ENCODE measurements at regions of chr3 and their contacts with region 1.

Region 1: DNA sequence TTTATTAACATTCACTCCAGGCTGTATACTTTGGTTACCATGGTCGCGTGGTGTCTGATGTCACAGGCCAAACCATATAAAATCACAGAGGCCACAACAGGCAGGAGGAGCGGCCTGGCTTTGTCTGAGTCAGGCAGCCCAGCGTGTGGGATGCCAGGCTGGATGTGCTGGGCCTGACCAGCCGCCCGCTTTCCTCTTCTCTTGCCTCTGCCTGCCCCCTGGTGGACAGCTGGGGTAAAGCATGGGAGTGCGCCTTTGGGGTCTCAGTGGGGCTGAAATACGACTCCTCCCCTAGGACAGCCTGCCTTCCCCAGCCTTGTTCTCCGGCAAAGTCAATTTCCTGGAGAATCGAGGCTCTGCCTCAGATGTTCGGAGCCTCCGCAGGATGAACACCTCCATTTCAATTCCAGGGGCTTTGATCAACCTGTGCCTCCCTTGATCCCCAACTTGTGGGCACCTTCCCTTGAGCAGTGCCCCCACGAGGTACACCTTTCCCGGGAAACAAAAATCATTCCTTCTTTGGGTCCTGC is 78.2 kb downstream of the CCNL1 start:
- DNase-seq: peak; percentile 92 to 97 (median 96)
- ATAC-seq: peak; percentile 85 to 94
- H3K4me3 ChIP-seq: no peak overlapping the region
- H3K27ac ChIP-seq: peak overlapping the region; percentile 60
- H3K4me1 ChIP-seq: peaks cover 3% of the 10 kb centered on the region
- H3K27me3 ChIP-seq: no peaks in the 10 kb centered on the region

Region 2: DNA sequence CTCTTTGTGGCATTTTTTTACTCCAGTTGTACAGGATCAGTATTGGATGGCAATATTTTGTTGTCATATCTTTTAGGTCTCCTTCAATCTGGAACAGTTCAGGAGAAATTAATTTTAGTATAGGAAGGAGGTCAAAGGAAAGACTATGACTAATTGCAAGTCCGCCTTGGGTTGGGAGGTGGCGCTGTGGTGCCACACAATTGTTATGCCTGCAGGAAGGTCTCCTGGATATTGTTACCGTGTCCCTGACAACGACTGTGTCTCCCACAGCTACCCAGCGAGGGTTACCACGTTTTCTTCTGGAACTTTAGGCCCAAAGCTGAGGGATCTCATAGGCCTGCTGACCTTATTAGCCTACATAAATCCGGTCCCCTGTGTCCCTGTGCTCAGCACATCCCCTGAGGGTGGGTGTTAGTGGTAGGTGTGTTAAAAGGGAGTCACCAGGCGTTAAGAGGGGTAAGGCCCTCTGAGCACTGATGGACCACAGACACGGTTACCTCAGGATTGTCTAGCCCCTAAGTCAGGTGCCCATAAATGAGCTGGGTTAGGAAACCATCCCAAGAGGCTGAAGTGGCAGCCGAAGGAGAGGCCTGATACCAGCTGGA is 929.8 kb before region 1 on chr3:
- intact Hi-C with region 1: no loop called
- DNase-seq: peak; percentile 61 to 86 (median 82)
- ATAC-seq: peak; percentile 65 to 71
- H3K4me3 ChIP-seq: no peak overlapping the region
- H3K27ac ChIP-seq: no peak overlapping the region
- H3K4me1 ChIP-seq: no peaks in the 10 kb centered on the region
- H3K27me3 ChIP-seq: no peaks in the 10 kb centered on the region

Region 3: DNA sequence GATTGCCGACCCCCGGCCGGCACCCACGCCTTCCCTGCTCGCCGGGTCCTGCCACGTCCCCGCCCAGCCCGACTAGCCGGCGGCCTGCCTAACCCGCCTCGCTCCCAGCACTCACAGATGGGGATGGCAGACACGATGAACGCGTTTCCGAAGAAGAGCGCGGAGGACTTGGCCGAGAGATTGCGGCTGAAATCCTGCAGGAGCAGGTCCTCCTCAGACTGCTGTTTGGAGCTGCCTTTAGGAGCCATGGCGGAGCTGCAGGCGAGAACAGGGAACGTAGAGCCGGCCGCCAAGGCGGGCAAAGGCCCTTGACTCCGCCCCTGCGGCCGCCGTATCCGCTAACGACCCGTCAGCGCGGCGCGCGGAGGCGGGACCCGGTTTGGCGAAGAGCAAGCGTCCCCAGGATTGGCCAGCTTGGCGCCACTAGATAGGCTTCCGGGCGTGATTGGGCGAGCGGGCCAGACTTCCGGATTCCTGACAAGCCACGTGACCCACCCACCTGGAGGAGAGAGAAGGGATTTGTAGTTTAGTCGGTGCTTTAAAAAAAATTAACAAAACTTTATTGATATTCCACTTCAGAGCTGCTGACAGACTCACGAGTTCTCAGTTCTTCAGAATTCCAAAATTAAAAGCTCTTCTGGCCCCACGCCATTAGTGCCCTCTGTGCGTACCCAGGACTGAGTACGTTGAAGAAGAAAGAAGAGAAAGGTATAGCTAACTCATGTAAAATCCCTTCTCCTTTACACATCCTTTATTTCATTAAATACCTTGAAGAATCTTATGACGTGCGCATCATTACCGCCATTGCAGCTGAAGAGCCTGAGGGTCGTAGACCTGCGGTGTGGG is 526.7 kb before region 1 on chr3 and contains the start of gene SSR3:
- intact Hi-C with region 1: loop called in 2 of 4 experiments (anchors 10 kb)
- DNase-seq: peak; percentile 100
- ATAC-seq: peak; percentile 100
- H3K4me3 ChIP-seq: peak within 1 kb of the TSS; percentile 77
- H3K27ac ChIP-seq: peak within 1 kb of the TSS; percentile 96
- H3K4me1 ChIP-seq: peaks cover 3% of the 10 kb centered on the region
- H3K27me3 ChIP-seq: no peaks in the 10 kb centered on the region
- total RNA-seq, gene SSR3: 139 to 171 (median 144) TPM

Region 4: GRCh38 chr3:156605686-156606605 is 475.8 kb before region 1 on chr3:
- intact Hi-C with region 1: loop called in 1 of 4 experiments (anchors 10 kb)
- DNase-seq: peak; percentile 66 to 84 (median 83)
- ATAC-seq: peak; percentile 91 to 98
- H3K4me3 ChIP-seq: peak overlapping the region; percentile 84
- H3K27ac ChIP-seq: peak overlapping the region; percentile 92
- H3K4me1 ChIP-seq: no peaks in the 10 kb centered on the region
- H3K27me3 ChIP-seq: no peaks in the 10 kb centered on the region

Region 5: GRCh38 chr3:156816800-156817645 is 264.7 kb before region 1 on chr3:
- intact Hi-C with region 1: loop called (anchors 2 to 10 kb)
- DNase-seq: peak; percentile 89 to 95 (median 93)
- ATAC-seq: peak; percentile 94 to 97
- H3K4me3 ChIP-seq: peak overlapping the region; percentile 50
- H3K27ac ChIP-seq: peak overlapping the region; percentile 98
- H3K4me1 ChIP-seq: no peaks in the 10 kb centered on the region
- H3K27me3 ChIP-seq: no peaks in the 10 kb centered on the region

Region 6: GRCh38 chr3:156826144-156826895 is 255.4 kb before region 1 on chr3 and contains the start of gene LEKR1:
- intact Hi-C with region 1: loop called in 2 of 4 experiments (anchors 2 to 10 kb)
- DNase-seq: peak; percentile 93 to 96 (median 95)
- ATAC-seq: peak; percentile 98 to 99
- H3K4me3 ChIP-seq: peak within 1 kb of the TSS; percentile 66
- H3K27ac ChIP-seq: peak within 1 kb of the TSS; percentile 88
- H3K4me1 ChIP-seq: no peaks in the 10 kb centered on the region
- H3K27me3 ChIP-seq: no peaks in the 10 kb centered on the region
- total RNA-seq, gene LEKR1: 0.97 to 2.0 (median 1.6) TPM

Region 7: DNA sequence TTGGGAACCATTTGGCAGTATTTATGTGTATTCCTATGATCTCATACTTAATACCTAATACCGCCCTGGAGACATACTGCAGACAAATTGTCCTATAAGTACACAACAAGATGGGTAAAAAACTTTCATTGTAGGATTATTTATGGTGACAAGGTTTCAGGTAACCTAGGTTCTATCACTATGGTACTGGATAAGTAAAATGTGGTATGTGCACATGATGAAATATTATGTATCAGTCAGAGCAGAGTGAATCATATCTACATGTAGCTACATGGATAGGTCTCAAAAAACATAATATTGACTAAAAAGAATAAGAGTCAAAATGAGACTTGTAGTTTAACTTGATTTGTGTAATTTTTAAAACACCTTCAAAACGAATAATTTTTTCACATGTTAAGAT is 107.8 kb before region 1 on chr3:
- intact Hi-C with region 1: no loop called
- DNase-seq: no peak
- ATAC-seq: no peak
- H3K4me3 ChIP-seq: no peak overlapping the region
- H3K27ac ChIP-seq: no peak overlapping the region
- H3K4me1 ChIP-seq: no peaks in the 10 kb centered on the region
- H3K27me3 ChIP-seq: no peaks in the 10 kb centered on the region

Region 8: DNA sequence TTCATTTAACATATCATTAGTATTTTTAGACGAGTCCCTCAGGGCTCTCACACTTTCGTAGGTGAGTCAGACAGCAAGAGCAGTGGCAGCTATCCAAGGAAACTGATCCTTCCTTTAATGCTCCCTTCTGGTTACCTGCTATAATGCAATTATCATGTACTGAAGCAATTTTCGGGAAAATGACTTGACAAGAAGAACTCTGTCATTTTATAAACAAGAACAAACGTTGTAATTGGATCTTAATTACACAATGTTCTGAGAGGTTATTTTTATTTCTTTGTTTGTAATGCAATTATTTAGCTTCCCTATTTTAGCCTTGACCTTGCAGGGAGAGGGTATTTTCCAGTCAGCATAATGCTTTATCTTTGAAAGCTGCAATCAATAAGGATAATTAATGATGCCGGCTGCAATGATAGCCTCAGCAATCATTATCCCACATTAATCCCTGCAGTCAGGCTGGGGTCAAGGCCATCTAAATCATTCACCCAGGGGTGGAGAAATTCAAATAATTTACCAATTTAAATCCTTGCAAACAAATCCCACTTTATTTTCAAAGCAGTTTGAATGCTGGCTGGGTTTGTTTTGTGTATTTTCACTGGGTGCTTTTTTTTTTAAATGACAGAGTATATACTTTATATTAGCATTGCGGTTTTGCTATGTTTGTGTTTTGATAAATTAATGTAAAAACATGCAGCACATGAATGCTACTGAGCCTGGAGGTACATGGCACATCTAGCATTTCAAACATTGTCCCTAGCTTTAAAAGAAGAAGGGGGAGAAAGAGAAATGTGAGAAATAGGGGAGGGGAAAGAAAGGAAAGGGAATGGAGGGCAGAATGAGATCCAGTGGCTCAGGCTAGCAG is 774.6 kb after region 1 on chr3:
- intact Hi-C with region 1: no loop called
- DNase-seq: no peak
- ATAC-seq: no peak
- H3K4me3 ChIP-seq: no peak overlapping the region
- H3K27ac ChIP-seq: no peak overlapping the region
- H3K4me1 ChIP-seq: no peaks in the 10 kb centered on the region
- H3K27me3 ChIP-seq: no peaks in the 10 kb centered on the region